A549 (cell line): ENCODE measurements at regions of chr17 and their contacts with region 1.

Region 1: DNA sequence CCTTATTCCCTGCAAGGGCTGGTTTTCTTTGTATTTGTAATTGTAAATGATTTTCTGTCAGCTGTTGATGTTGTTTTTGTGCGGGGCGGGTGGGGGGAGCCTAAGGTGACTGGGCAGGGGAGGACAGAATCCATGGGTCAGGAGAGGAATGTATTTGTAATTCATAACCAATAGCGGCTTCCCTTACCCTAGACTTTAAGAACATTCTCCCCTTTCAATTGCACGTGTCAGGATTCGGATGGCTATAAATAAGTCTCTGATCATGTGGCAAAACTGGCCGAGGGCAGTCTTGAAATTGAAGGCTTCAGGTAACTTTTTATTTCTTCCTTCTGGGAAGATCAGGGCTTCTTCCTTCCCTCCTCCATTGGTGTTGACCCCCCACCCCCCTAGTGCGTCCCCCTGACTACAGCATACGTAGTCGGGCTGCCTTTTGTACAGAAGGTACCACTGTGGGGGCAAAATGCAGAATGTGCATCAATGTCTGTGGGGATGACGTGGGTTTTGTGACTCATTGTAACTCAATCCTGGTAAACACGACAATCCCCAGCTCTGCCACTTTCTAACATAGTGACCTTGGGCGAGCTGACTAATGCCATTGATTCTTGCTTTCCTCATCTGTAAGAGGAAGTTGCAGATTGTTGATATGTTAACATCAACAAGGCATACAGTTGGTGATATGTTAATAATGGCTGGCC is 16.2 kb downstream of the MARCHF10 start:
- DNase-seq: peak; percentile 87 to 98
- ATAC-seq: peak; percentile 85 to 87
- H3K4me3 ChIP-seq: peak overlapping the region; percentile 15; the same call in 1 of the 3 replicates
- H3K27ac ChIP-seq: peak overlapping the region; percentile 88 to 92
- H3K4me1 ChIP-seq: peaks cover 42% of the 10 kb centered on the region
- CTCF ChIP-seq: no peak
- EP300 ChIP-seq: peak; percentile 97 to 98
- POLR2A ChIP-seq: no peak
- RAD21 ChIP-seq: peak; percentile 49 to 65

Region 2: GRCh38 chr17:62808196-62808930 is 16.5 kb after region 1 on chr17 and contains the start of gene MARCHF10:
- CTCF ChIA-PET with region 1: interaction called, 5 read pairs
- POLR2A ChIA-PET with region 1: interaction called, 11 read pairs
- DNase-seq: no peak
- ATAC-seq: peak in 1 of 2 experiments; percentile 32; a peak in 2 of 6 replicates
- H3K4me3 ChIP-seq: peak within 1 kb of the TSS; percentile 29
- H3K27ac ChIP-seq: peak within 1 kb of the TSS; percentile 89 to 90
- H3K4me1 ChIP-seq: peaks cover 37% of the 10 kb centered on the region
- CTCF ChIP-seq: no peak
- EP300 ChIP-seq: no peak
- POLR2A ChIP-seq: no peak
- RAD21 ChIP-seq: no peak
- polyA plus RNA-seq, gene MARCHF10: 0.57 and 0.73 TPM in 2 replicates

Region 3: GRCh38 chr17:62819475-62820212 is 27.7 kb after region 1 on chr17:
- CTCF ChIA-PET with region 1: interaction called, 8 read pairs
- POLR2A ChIA-PET with region 1: interaction called, 17 read pairs
- DNase-seq: peak; percentile 96 to 97
- ATAC-seq: peak; percentile 94 to 98
- H3K4me3 ChIP-seq: no peak overlapping the region
- H3K27ac ChIP-seq: peak overlapping the region; percentile 91 to 95
- H3K4me1 ChIP-seq: peaks cover 65% of the 10 kb centered on the region
- CTCF ChIP-seq: no peak
- EP300 ChIP-seq: peak in 1 of 2 experiments; percentile 80; a peak in 3 of 5 replicates
- POLR2A ChIP-seq: no peak
- RAD21 ChIP-seq: peak; percentile 53 to 66; a peak in 4 of 5 replicates

Region 4: GRCh38 chr17:62860907-62861848 is 69.3 kb after region 1 on chr17:
- CTCF ChIA-PET with region 1: no interaction called
- POLR2A ChIA-PET with region 1: no interaction called
- DNase-seq: no peak
- ATAC-seq: peak; percentile 36 to 53; a peak in 4 of 6 replicates
- H3K4me3 ChIP-seq: no peak overlapping the region
- H3K27ac ChIP-seq: peak overlapping the region in 1 of 2 experiments; percentile 6; a peak in 1 of 6 replicates
- H3K4me1 ChIP-seq: no peaks in the 10 kb centered on the region
- CTCF ChIP-seq: no peak
- EP300 ChIP-seq: no peak
- POLR2A ChIP-seq: no peak
- RAD21 ChIP-seq: no peak

Region 5: DNA sequence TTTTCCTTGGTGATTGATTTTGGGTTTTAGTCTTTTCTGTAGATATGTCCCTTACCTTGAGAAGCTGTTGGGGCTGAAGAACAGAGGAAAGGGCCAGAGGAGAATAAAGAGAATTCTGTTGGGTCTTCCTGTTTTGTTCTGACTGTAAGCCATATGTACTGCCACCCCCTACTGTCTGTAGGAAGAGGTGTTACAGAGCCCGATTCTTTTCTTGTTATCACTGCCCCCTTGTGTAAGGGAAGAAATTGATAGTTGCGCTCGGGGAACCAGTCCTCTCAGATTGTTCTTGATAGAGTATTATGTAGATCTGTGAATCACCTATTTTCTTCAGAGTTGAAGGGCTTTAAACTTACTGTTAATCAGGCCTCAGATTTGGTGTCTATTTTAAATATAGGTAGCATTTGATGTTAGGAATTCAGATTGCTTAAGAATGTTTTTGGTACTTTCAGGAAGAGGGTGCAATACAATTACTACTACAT is 176.6 kb after region 1 on chr17:
- CTCF ChIA-PET with region 1: interaction called, 6 read pairs
- POLR2A ChIA-PET with region 1: interaction called, 12 read pairs
- DNase-seq: peak; percentile 93 to 98
- ATAC-seq: peak; percentile 65 to 87
- H3K4me3 ChIP-seq: peak overlapping the region; percentile 98
- H3K27ac ChIP-seq: peak overlapping the region; percentile 65 to 98
- H3K4me1 ChIP-seq: peaks cover 56% of the 10 kb centered on the region
- CTCF ChIP-seq: peak; percentile 100
- EP300 ChIP-seq: no peak
- POLR2A ChIP-seq: no peak
- RAD21 ChIP-seq: peak; percentile 98 to 99